ENCODE measurements at regions of chr5 and their contacts with region 1.

Region 1: GRCh38 chr5:168706655-168707069 is 127.5 kb upstream of the PANK3 start:
- DNase-seq: peak; percentile 9 to 58
- H3K4me3 ChIP-seq: no peak overlapping the region
- H3K27ac ChIP-seq: no peak overlapping the region
- H3K4me1 ChIP-seq: no peaks in the 10 kb centered on the region
- H3K27me3 ChIP-seq: no peaks in the 10 kb centered on the region
- CTCF ChIP-seq: peak; percentile 68 to 89 (median 71)
- EP300 ChIP-seq: no peak
- POLR2A ChIP-seq: no peak
- RAD21 ChIP-seq: peak; percentile 94 to 96

Region 2: DNA sequence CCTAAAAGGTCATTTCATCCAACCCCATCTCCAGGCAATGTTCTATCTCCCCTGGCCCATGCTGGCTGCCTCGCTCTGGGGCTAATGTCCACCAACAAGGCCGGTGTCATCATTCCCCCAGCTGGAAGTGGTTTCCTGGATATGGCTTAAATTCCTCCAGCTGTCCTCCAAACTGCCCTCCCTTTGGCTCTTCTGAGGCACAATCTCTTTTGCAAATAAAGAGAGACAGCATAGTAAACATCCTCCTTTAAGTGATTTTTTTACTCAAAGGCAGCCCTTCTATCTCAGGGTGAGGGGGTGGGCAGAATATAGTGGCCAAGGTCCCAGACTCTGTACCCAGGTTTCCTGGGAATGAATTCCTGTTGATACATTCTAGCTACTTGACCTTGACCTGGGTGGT is 10.1 kb before region 1 on chr5:
- CTCF ChIA-PET with region 1: interaction called, 89 read pairs
- POLR2A ChIA-PET with region 1: no interaction called
- DNase-seq: no peak
- H3K4me3 ChIP-seq: no peak overlapping the region
- H3K27ac ChIP-seq: no peak overlapping the region
- H3K4me1 ChIP-seq: peaks cover 0 to 2% (median 0%) of the 10 kb centered on the region in 4 experiments; a peak in 1 of 7 replicates
- H3K27me3 ChIP-seq: no peaks in the 10 kb centered on the region
- CTCF ChIP-seq: no peak
- EP300 ChIP-seq: no peak
- POLR2A ChIP-seq: no peak
- RAD21 ChIP-seq: no peak

Region 3: DNA sequence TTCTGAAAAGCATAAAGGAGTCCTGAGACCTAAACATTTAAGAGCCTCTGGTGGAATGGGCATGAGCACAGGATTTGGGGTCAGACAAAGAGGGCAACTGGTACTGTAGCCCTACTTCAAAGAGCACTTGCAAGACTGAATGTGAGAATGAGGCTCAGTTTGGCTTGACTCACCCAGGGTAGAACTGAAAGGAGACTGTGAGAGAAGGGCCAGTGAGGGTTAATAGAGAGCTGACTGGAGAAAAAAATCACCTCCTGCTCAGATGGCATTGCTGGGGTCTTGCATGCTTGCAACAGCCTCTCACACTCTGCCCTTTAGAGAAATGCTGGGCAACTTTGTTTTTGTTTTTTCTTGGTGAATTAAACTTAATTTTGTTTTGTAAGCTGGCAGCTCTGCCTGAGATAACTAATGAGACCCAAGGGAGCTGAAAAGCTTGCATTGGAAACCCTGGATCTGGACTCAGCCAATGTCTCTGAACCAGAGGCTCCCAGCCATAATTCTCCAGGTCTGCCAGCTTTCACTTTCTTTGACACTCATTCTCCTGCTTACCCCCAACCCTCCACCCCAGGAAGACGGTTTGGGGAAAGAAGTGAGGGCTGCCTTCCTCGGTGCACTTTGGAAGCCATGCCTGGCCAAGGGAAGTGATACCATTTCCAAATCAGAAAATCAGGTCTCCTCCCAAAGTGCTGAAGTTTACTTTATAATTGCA is 33.6 kb after region 1 on chr5:
- CTCF ChIA-PET with region 1: interaction called, 17 read pairs
- POLR2A ChIA-PET with region 1: no interaction called
- DNase-seq: no peak
- H3K4me3 ChIP-seq: no peak overlapping the region
- H3K27ac ChIP-seq: no peak overlapping the region
- H3K4me1 ChIP-seq: no peaks in the 10 kb centered on the region
- H3K27me3 ChIP-seq: no peaks in the 10 kb centered on the region
- CTCF ChIP-seq: no peak
- EP300 ChIP-seq: no peak
- POLR2A ChIP-seq: no peak
- RAD21 ChIP-seq: no peak

Region 4: DNA sequence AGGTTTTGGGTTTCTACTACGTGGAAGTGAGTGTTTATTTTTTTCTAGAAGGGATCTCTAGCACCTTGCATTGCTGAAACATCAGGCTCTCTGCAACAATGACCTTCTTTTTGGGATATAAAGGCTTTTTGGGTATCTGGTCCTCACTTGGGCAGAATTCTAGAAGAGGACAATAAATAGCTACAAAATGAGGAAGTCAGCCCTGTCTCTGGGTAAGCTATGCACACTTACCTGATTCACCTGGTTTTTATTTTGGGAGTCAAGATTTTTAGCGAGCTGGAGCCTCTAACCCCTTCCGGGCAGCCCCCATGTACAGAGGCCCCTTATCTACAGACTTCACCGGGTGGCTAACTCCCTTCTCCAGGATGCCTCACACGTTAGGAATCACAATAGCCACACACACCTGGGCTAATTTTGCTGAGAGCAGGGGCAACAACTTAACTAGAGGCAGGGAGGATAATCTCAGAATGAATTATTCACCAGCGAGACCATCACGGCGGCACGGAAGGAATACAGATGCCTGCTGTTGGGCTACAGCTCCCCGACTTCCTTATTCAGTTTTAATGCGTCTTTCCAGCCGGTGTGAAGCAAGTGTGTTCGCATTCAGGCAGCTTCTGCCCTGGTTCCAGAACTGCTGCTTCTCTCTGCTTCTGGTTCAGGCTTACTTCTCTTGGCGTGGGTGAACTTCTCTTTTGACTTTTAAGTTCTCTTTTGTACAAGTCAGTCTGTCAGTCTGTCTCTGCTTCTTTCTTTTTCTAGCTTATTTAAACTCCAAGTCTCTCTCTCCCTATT is 213.6 kb after region 1 on chr5:
- CTCF ChIA-PET with region 1: interaction called, 11 read pairs
- POLR2A ChIA-PET with region 1: no interaction called
- DNase-seq: no peak
- H3K4me3 ChIP-seq: no peak overlapping the region
- H3K27ac ChIP-seq: no peak overlapping the region
- H3K4me1 ChIP-seq: peaks cover 0 to 6% (median 0%) of the 10 kb centered on the region in 4 experiments; a peak in 1 of 7 replicates
- H3K27me3 ChIP-seq: 0 out of 7 replicates have a peak, but pooled peaks cover 0 to 2% (median 0%) of the 10 kb centered on the region in 4 experiments
- CTCF ChIP-seq: no peak
- EP300 ChIP-seq: no peak
- POLR2A ChIP-seq: no peak
- RAD21 ChIP-seq: no peak

Region 5: DNA sequence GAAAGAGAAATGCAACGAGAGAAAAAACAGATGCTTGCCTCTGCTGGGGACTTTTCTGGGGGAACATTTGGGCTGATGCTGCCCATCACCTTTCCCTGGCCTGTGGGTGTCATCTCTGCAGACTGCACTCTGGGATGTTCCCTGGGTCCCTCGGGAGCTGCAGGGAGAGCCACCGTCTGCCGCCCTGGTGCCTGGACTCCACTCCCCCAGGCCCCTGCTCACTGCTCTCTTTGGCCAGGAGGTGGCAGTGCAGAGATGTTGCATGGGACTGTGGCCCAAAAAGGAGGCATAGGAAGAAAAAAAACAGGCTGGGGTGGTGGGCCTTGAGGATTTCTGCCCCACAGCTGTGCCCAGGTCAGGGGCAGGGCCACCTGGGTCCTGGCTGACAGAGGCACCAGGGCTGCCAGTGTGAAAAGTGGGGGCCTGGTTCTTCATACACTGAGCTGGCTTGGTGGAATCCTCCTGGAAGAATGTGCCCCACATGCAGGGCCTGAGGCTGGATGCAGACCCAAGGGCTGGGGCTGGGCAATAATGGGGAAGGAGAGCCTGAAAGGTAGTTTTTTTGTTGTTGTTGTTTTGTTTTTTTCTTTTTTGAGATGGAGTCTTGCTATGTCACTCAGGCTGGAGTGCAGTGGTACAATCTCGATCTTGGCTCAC is 240.7 kb after region 1 on chr5:
- CTCF ChIA-PET with region 1: interaction called, 60 read pairs
- POLR2A ChIA-PET with region 1: no interaction called
- DNase-seq: peak; percentile 19 to 88
- H3K4me3 ChIP-seq: no peak overlapping the region
- H3K27ac ChIP-seq: no peak overlapping the region
- H3K4me1 ChIP-seq: peaks cover 0 to 2% (median under 1%) of the 10 kb centered on the region in 4 experiments; a peak in 3 of 7 replicates
- H3K27me3 ChIP-seq: no peaks in the 10 kb centered on the region
- CTCF ChIP-seq: peak; percentile 89 to 90 (median 89)
- EP300 ChIP-seq: no peak
- POLR2A ChIP-seq: no peak
- RAD21 ChIP-seq: peak; percentile 86 to 93

Region 6: GRCh38 chr5:169581580-169582227 is 875.0 kb after region 1 on chr5:
- CTCF ChIA-PET with region 1: interaction called, 12 read pairs
- POLR2A ChIA-PET with region 1: no interaction called
- DNase-seq: peak in 1 of 2 experiments; percentile 73
- H3K4me3 ChIP-seq: no peak overlapping the region
- H3K27ac ChIP-seq: no peak overlapping the region
- H3K4me1 ChIP-seq: no peaks in the 10 kb centered on the region
- H3K27me3 ChIP-seq: no peaks in the 10 kb centered on the region
- CTCF ChIP-seq: peak in 2 of 3 experiments; percentile 48 to 70; a peak in 2 of 4 replicates
- EP300 ChIP-seq: no peak
- POLR2A ChIP-seq: no peak
- RAD21 ChIP-seq: peak; percentile 73 to 74